ENCODE measurements at regions of chr18 and their contacts with region 1.

Region 1: GRCh38 chr18:13530879-13531387 is 195.4 kb downstream of the FAM210A start:
- DNase-seq: peak; percentile 43
- ATAC-seq: peak; percentile 51
- H3K4me3 ChIP-seq: no peak overlapping the region
- H3K4me3 Mint-ChIP-seq: no peak overlapping the region
- H3K27ac ChIP-seq: no peak overlapping the region
- H3K27ac Mint-ChIP-seq: no peak overlapping the region
- H3K4me1 ChIP-seq: peaks cover 0 to 8% of the 10 kb centered on the region in 2 donors
- H3K4me1 Mint-ChIP-seq: peaks cover 8% of the 10 kb centered on the region
- H3K27me3 ChIP-seq: no peaks in the 10 kb centered on the region
- H3K27me3 Mint-ChIP-seq: no peaks in the 10 kb centered on the region
- CTCF ChIP-seq: no peak

Region 2: GRCh38 chr18:13381944-13382365 is 149.0 kb before region 1 on chr18:
- CTCF ChIA-PET with region 1: no interaction called
- POLR2A ChIA-PET with region 1: no interaction called
- intact Hi-C with region 1: loop called (anchors 10 kb)
- DNase-seq: peak; percentile 71
- ATAC-seq: peak; percentile 70
- H3K4me3 ChIP-seq: peak overlapping the region; percentile 18 to 61 (median 40)
- H3K4me3 Mint-ChIP-seq: peak overlapping the region; percentile 82
- H3K27ac ChIP-seq: peak overlapping the region; percentile 53 to 79
- H3K27ac Mint-ChIP-seq: peak overlapping the region; percentile 80
- H3K4me1 ChIP-seq: peaks cover 16 to 19% of the 10 kb centered on the region in 2 donors
- H3K4me1 Mint-ChIP-seq: peaks cover 27% of the 10 kb centered on the region
- H3K27me3 ChIP-seq: no peaks in the 10 kb centered on the region
- H3K27me3 Mint-ChIP-seq: no peaks in the 10 kb centered on the region
- CTCF ChIP-seq: no peak

Region 3: DNA sequence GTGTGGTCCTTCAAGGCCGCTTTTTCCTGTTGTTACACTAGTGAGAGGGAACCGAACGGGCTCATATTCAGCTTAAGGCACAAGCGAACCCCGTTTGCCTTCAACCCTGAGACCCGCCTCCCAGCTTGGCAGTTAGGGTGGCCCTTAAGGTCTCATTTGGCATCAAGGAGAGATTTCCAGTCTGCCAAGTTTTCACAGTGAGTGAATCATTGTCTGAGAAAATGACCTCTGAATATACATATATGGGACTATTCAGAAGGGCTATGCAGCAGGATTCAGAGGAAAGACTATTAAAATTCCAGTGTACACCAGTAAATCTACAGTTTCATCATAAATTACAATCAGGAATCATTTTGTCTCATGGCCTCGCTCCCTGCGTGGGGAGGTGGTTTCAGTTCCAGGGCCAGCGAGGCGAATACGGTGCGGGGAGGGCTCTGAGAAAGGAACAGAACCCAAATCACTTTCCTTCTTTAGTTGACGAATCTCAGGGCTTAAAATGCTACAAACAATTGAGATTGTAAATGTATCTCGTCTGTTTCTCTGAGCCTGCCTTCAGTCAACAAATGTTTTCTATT is 36.0 kb before region 1 on chr18:
- CTCF ChIA-PET with region 1: no interaction called
- POLR2A ChIA-PET with region 1: no interaction called
- intact Hi-C with region 1: no loop called
- DNase-seq: no peak
- ATAC-seq: no peak
- H3K4me3 ChIP-seq: no peak overlapping the region
- H3K4me3 Mint-ChIP-seq: no peak overlapping the region
- H3K27ac ChIP-seq: no peak overlapping the region
- H3K27ac Mint-ChIP-seq: no peak overlapping the region
- H3K4me1 ChIP-seq: peaks cover 0 to 11% of the 10 kb centered on the region in 2 donors
- H3K4me1 Mint-ChIP-seq: peaks cover 9% of the 10 kb centered on the region
- H3K27me3 ChIP-seq: no peaks in the 10 kb centered on the region
- H3K27me3 Mint-ChIP-seq: no peaks in the 10 kb centered on the region
- CTCF ChIP-seq: no peak

Measured in B cell (primary cell).